RWPE1 (cell line): ENCODE measurements at regions of chr16 and their contacts with region 1.

Region 1: GRCh38 chr16:67806428-67807147 is at the starts of genes RANBP10 and TSNAXIP1:
- DNase-seq: peak; percentile 97
- H3K27ac ChIP-seq: peak within 1 kb of the TSS; percentile 77
- CTCF ChIP-seq: no peak

Region 2: GRCh38 chr16:67719048-67719777 is 87.4 kb before region 1 on chr16 and contains the start of gene GFOD2:
- CTCF ChIA-PET with region 1: no interaction called
- POLR2A ChIA-PET with region 1: interaction called, 17 read pairs
- DNase-seq: peak; percentile 100
- H3K27ac ChIP-seq: peak within 1 kb of the TSS; percentile 77
- CTCF ChIP-seq: no peak